B cell (primary cell): ENCODE measurements at regions of chr15 and their contacts with region 1.

Region 1: GRCh38 chr15:43791993-43792760 is at the start of gene SERF2:
- DNase-seq: peak; percentile 100
- ATAC-seq: peak; percentile 86
- H3K4me3 ChIP-seq: peak within 1 kb of the TSS; percentile 50 to 100 (median 94)
- H3K4me3 Mint-ChIP-seq: peak within 1 kb of the TSS; percentile 93
- H3K27ac ChIP-seq: peak within 1 kb of the TSS; percentile 96
- H3K27ac Mint-ChIP-seq: peak within 1 kb of the TSS; percentile 93
- H3K4me1 ChIP-seq: peaks cover 37 to 73% of the 10 kb centered on the region in 2 donors
- H3K4me1 Mint-ChIP-seq: peaks cover 66% of the 10 kb centered on the region
- H3K27me3 ChIP-seq: no peaks in the 10 kb centered on the region
- H3K27me3 Mint-ChIP-seq: no peaks in the 10 kb centered on the region
- CTCF ChIP-seq: no peak
- total RNA-seq, gene SERF2: 436 and 455 TPM in 2 replicates

Region 2: GRCh38 chr15:43762824-43763223 is 29.4 kb before region 1 on chr15:
- CTCF ChIA-PET with region 1: interaction called, 5 read pairs
- POLR2A ChIA-PET with region 1: interaction called, 12 read pairs
- intact Hi-C with region 1: no loop called
- DNase-seq: no peak
- ATAC-seq: no peak
- H3K4me3 ChIP-seq: no peak overlapping the region
- H3K4me3 Mint-ChIP-seq: no peak overlapping the region
- H3K27ac ChIP-seq: no peak overlapping the region
- H3K27ac Mint-ChIP-seq: no peak overlapping the region
- H3K4me1 ChIP-seq: no peaks in the 10 kb centered on the region
- H3K4me1 Mint-ChIP-seq: no peaks in the 10 kb centered on the region
- H3K27me3 ChIP-seq: no peaks in the 10 kb centered on the region
- H3K27me3 Mint-ChIP-seq: no peaks in the 10 kb centered on the region
- CTCF ChIP-seq: no peak

Region 3: DNA sequence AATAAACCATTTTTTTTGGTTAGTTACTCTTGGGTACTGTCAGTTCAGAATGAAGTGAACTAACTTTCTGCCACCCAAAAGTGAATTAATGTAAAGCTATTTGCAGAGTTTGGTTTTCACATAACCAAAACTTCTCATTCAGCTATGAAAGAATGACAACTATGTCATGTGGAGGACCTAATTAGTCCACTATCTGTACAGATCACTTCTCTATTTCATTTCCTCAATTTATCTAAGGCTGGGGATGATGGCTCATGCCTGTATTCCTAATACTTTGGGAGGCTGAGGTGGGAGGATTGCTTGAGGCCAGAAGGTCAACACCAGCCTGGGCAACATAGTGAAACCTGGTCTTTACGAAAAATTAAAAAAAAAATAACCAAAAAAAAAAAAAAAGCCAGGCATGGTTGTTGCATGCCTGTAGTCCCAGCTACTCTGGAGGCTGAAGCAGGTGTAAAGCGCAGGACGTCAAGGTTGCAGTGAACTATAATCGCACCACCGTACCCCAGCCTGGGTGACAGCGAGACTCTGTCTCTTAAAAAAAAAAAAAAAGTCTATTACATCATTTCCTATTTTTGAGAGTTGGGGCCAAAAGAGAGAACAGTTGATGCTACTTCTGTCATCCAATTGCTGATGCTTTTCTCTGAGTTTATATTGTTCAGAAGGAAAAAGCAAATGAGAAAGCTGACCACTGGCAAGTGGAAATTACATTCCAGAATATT is 16.9 kb after region 1 on chr15:
- CTCF ChIA-PET with region 1: interaction called, 5 read pairs
- POLR2A ChIA-PET with region 1: interaction called, 15 read pairs
- intact Hi-C with region 1: loop called (anchors 1 kb)
- DNase-seq: peak; percentile 87
- ATAC-seq: peak; percentile 94
- H3K4me3 ChIP-seq: peak overlapping the region in 1 of 5 experiments; percentile 28
- H3K4me3 Mint-ChIP-seq: peak overlapping the region; percentile 79
- H3K27ac ChIP-seq: peak overlapping the region; percentile 84 to 93
- H3K27ac Mint-ChIP-seq: peak overlapping the region; percentile 95
- H3K4me1 ChIP-seq: peaks cover 28 to 31% of the 10 kb centered on the region in 2 donors
- H3K4me1 Mint-ChIP-seq: peaks cover 25% of the 10 kb centered on the region
- H3K27me3 ChIP-seq: no peaks in the 10 kb centered on the region
- H3K27me3 Mint-ChIP-seq: no peaks in the 10 kb centered on the region
- CTCF ChIP-seq: no peak